ENCODE measurements at regions of chr18 and their contacts with region 1.

Region 1: DNA sequence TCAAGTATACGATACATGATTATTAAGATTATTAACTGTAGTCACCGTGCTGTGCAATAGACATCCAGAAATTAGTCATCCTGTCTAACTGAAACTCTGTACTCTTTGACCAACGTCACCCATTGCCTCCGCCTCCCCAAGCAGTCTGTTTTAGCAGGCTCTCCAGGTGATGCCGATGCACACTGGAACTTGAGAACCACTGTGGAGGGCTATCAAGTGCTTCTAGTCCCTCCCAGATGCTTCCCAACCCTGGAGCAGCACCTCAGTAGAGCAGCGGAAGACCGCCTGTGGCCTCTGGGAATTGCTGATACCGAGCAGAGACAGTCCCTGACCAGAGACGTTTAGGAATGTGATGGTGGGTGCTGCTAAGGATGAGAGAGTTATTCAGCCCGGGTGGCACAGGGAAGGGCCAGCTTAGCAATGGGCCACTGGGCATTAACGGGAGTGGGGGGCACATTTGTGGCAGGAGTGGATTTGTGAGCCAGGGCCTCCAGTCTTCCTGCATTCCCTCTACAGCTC is 50.7 kb downstream of the LIPG start:
- DNase-seq: no peak
- H3K4me3 ChIP-seq: no peak overlapping the region
- H3K27ac ChIP-seq: no peak overlapping the region
- H3K4me1 ChIP-seq: peaks cover 39% of the 10 kb centered on the region
- H3K27me3 ChIP-seq: no peaks in the 10 kb centered on the region
- CTCF ChIP-seq: no peak

Region 2: DNA sequence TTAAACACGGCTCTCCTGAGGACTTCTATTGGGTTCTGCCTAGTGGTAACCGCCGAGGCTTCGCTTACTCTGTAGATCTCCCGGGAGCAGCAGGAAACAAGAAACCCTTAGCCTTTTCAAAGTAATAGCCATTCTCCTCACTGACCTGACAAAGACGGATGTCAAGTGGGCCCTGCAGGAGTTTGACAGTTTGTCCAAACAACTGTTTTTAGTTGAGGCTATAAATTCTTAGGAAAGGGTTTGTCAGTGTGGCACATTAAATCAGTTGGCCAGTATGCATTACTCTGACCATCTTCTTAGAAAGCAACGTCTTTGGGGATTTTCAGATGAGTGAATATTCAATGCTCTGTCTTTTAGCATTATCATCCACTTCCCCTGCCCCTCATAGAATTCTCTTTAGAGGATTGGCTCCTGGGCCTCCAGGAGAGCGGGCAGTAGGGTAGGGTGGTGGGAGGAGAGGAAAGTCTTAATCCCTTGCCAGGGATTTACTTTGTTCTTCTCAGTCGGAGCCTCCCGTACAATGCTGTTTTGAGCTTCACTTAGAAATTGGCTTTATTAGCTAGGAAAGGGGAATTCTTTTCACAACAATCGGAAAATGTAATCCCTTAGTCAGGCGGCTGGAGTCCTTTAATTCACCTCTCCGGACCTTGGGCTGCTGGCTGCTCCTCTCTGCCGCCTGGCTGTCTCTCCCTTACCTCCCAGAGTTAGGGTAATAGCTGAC is 112.2 kb before region 1 on chr18:
- CTCF ChIA-PET with region 1: no interaction called
- POLR2A ChIA-PET with region 1: interaction called, 18 read pairs
- intact Hi-C with region 1: no loop called
- DNase-seq: no peak
- H3K4me3 ChIP-seq: no peak overlapping the region
- H3K27ac ChIP-seq: no peak overlapping the region
- H3K4me1 ChIP-seq: no peaks in the 10 kb centered on the region
- H3K27me3 ChIP-seq: no peaks in the 10 kb centered on the region
- CTCF ChIP-seq: no peak

Region 3: GRCh38 chr18:49582579-49582978 is 30.0 kb before region 1 on chr18:
- CTCF ChIA-PET with region 1: interaction called, 21 read pairs
- POLR2A ChIA-PET with region 1: no interaction called
- intact Hi-C with region 1: no loop called
- DNase-seq: no peak
- H3K4me3 ChIP-seq: no peak overlapping the region
- H3K27ac ChIP-seq: no peak overlapping the region
- H3K4me1 ChIP-seq: no peaks in the 10 kb centered on the region
- H3K27me3 ChIP-seq: no peaks in the 10 kb centered on the region
- CTCF ChIP-seq: no peak

Region 4: GRCh38 chr18:49656073-49656591 is 43.6 kb after region 1 on chr18:
- CTCF ChIA-PET with region 1: no interaction called
- POLR2A ChIA-PET with region 1: interaction called, 3 read pairs
- intact Hi-C with region 1: loop called (anchors 1 kb)
- DNase-seq: peak; percentile 66 to 99
- H3K4me3 ChIP-seq: 0 out of 2 replicates have a peak overlapping the region, but pooled peaks have one; percentile 11
- H3K27ac ChIP-seq: peak overlapping the region; percentile 87
- H3K4me1 ChIP-seq: peaks cover 19% of the 10 kb centered on the region
- H3K27me3 ChIP-seq: no peaks in the 10 kb centered on the region
- CTCF ChIP-seq: no peak

Region 5: GRCh38 chr18:50240083-50240563 is 627.5 kb after region 1 on chr18:
- CTCF ChIA-PET with region 1: no interaction called
- POLR2A ChIA-PET with region 1: interaction called, 26 read pairs
- intact Hi-C with region 1: no loop called
- DNase-seq: peak; percentile 6 to 75
- H3K4me3 ChIP-seq: no peak overlapping the region
- H3K27ac ChIP-seq: peak overlapping the region; percentile 84
- H3K4me1 ChIP-seq: no peaks in the 10 kb centered on the region
- H3K27me3 ChIP-seq: no peaks in the 10 kb centered on the region
- CTCF ChIP-seq: no peak

Measured in PC-9 (cell line).